ENCODE measurements at regions of chr6 and their contacts with region 1.

Region 1: GRCh38 chr6:99868074-99868702 is 125.8 kb downstream of the MCHR2 start:
- DNase-seq: peak; percentile 80
- H3K4me3 ChIP-seq: no peak overlapping the region
- H3K27ac ChIP-seq: no peak overlapping the region
- H3K4me1 ChIP-seq: no peaks in the 10 kb centered on the region
- H3K27me3 ChIP-seq: no peaks in the 10 kb centered on the region
- CTCF ChIP-seq: peak; percentile 94

Region 2: DNA sequence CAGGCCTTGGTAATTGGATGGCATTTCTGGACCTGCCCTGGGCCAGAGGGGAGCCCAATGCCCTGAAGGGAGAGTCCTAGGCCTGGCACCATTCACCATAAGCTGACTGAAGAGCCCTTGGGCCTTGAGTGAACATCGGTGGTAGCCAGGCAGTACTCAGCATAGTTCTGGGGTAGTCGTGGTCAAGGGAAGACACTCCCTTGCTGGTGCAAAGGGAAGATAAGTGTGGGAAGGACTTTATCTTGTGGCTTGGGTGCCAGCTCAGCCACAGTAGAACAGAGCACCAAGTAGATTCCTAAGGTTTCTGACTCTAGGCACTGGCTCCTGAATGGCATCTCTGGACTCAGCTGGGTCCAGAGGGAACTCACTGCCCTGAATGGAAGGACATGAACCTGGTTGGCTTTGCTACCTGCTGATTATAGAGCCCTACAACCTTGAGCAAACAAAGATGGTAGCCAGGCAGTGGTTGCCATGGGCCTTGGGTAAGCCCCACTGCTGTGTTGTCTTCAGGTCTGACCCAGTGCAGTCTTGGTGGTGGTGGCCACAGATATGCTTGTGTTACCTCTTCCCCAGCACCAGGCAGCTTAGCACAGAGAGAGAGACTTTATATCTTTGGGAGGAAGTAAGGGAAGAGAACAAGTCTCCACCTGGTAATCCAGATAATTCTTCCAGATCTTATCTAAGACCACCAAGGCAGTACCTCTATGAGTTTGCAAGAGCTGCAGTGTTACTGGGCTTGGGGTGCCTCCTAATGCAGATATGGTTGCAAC is 178.1 kb before region 1 on chr6:
- CTCF ChIA-PET with region 1: no interaction called
- POLR2A ChIA-PET with region 1: no interaction called
- intact Hi-C with region 1: no loop called
- DNase-seq: no peak
- H3K4me3 ChIP-seq: no peak overlapping the region
- H3K27ac ChIP-seq: no peak overlapping the region
- H3K4me1 ChIP-seq: no peaks in the 10 kb centered on the region
- H3K27me3 ChIP-seq: peaks cover 3% of the 10 kb centered on the region
- CTCF ChIP-seq: no peak

Region 3: GRCh38 chr6:99905209-99906106 is 37.3 kb after region 1 on chr6:
- CTCF ChIA-PET with region 1: interaction called, 11 read pairs
- POLR2A ChIA-PET with region 1: no interaction called
- intact Hi-C with region 1: loop called (anchors 2 kb)
- DNase-seq: peak; percentile 74
- H3K4me3 ChIP-seq: no peak overlapping the region
- H3K27ac ChIP-seq: no peak overlapping the region
- H3K4me1 ChIP-seq: no peaks in the 10 kb centered on the region
- H3K27me3 ChIP-seq: no peaks in the 10 kb centered on the region
- CTCF ChIP-seq: peak; percentile 74

Region 4: DNA sequence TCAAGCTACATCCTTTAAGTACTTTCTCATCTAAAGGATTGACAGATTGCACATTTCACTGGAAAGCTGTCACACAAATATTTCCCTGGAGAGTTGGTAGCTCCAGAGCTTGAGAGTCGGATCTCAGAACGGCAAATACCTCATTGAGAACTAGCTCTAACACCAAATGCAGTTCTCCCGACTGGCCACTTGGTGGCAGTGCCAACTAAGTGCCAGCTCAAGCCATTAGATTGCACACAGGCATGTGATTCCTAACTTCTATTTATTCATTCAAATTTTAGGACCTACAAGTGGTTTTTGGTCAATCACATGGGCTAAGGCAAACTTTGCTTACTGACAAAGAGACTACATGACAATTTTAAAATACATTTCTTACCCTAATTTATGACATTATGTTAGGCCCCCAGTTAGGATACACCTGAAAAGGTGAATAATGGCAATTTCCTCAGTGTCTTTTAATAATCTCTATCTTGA is 133.8 kb after region 1 on chr6:
- CTCF ChIA-PET with region 1: interaction called, 4 read pairs
- POLR2A ChIA-PET with region 1: no interaction called
- intact Hi-C with region 1: loop called (anchors 5 kb)
- DNase-seq: peak; percentile 71
- H3K4me3 ChIP-seq: no peak overlapping the region
- H3K27ac ChIP-seq: no peak overlapping the region
- H3K4me1 ChIP-seq: no peaks in the 10 kb centered on the region
- H3K27me3 ChIP-seq: peaks cover 12% of the 10 kb centered on the region
- CTCF ChIP-seq: peak; percentile 90

Region 5: GRCh38 chr6:100088009-100088408 is 219.8 kb after region 1 on chr6:
- CTCF ChIA-PET with region 1: no interaction called
- POLR2A ChIA-PET with region 1: no interaction called
- intact Hi-C with region 1: loop called (anchors 2 kb)
- DNase-seq: no peak
- H3K4me3 ChIP-seq: no peak overlapping the region
- H3K27ac ChIP-seq: no peak overlapping the region
- H3K4me1 ChIP-seq: peaks cover 10% of the 10 kb centered on the region
- H3K27me3 ChIP-seq: no peaks in the 10 kb centered on the region
- CTCF ChIP-seq: no peak

Region 6: GRCh38 chr6:100099189-100100074 is 231.2 kb after region 1 on chr6:
- CTCF ChIA-PET with region 1: interaction called, 26 read pairs
- POLR2A ChIA-PET with region 1: no interaction called
- intact Hi-C with region 1: loop called (anchors 1 kb)
- DNase-seq: peak; percentile 60
- H3K4me3 ChIP-seq: no peak overlapping the region
- H3K27ac ChIP-seq: no peak overlapping the region
- H3K4me1 ChIP-seq: peaks cover 22% of the 10 kb centered on the region
- H3K27me3 ChIP-seq: no peaks in the 10 kb centered on the region
- CTCF ChIP-seq: peak; percentile 77

Region 7: DNA sequence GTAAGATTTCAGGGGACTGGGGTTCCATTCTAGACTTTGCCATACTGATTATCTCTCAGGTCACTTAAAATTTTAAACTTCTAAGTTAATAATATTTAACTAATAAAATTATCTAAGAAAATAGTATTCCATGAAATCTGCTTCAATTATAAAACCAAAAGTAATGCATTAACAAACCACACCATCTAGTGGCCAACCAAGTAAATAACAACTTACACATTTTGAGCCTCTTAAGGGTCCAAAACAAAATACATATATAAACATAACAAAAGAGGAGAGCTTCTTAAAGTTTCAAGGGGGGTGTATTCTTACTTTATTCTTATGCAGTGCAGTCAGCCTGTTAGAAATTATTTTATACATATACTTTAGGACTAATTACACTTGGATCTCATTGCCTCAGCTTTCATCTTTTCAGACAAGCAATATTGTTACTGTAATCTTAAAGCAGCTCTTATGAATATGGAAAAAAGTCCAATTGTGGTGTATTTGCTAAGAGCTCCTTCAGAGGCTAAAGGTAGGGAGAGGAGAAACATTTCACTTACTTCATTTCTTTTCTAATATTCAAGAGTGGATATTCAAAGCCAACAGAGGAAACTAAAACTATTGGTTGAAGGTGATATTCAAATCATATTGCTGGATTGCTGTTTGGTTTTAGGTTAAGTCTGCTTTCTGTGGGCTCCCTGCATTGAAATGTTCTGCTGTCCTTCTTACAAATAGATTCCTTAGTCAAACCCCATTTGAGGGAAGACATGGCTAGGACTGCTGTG is 796.3 kb after region 1 on chr6:
- CTCF ChIA-PET with region 1: no interaction called
- POLR2A ChIA-PET with region 1: no interaction called
- intact Hi-C with region 1: loop called (anchors 5 kb)
- DNase-seq: peak; percentile 42
- H3K4me3 ChIP-seq: no peak overlapping the region
- H3K27ac ChIP-seq: no peak overlapping the region
- H3K4me1 ChIP-seq: no peaks in the 10 kb centered on the region
- H3K27me3 ChIP-seq: no peaks in the 10 kb centered on the region
- CTCF ChIP-seq: peak; percentile 79

Measured in A673 (cell line).